ENCODE measurements at regions of chr3 and their contacts with region 1.

Region 1: DNA sequence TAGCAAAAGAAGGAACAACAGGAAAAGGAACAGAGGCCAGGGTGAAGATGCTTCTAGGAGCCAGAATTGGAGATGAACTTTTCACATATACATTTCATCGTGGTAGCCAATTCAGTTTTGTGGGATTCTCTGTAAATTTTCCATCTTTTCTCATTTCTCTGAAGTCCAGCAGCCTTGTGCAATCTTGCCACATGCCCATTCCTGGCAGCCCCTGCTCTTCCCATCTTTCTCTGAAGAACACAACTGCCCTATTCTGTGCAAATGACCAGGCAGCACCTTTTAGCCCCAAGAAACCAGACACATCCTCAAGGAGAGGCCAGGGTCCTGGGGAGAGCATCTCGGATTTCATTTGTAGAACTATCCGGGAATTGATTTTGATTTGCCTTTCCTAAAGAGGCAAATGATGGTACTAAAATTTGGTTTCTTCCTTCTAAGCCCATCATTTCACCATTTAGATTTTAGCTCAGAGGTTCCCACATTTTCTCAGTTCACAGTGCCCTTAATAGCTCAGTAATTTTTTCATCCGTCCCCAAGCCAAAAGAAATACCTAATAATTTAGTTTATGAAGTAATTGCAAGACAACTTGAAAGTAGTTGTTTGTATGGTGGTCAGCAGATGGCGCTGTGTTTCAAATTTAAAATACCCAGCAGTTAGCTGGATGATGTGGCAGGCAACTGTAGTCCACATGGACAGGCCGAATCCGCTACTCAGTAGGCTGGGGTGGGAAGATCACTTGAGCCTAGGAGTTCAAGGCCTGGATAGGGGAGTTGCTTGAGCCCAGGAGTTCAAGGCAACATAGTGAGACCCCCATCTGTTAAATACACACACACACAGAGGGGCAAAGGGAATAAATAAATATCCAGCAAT is 61.3 kb upstream of the ACKR4 start:
- DNase-seq: peak; percentile 77 to 82 (median 80)
- ATAC-seq: peak; percentile 82
- H3K4me3 ChIP-seq: no peak overlapping the region
- H3K27ac ChIP-seq: peak overlapping the region in 1 of 4 donors; percentile 18
- H3K4me1 ChIP-seq: peaks cover 34% of the 10 kb centered on the region
- H3K27me3 ChIP-seq: no peaks in the 10 kb centered on the region
- CTCF ChIP-seq: peak; percentile 51 to 83 (median 72)
- POLR2A ChIP-seq: no peak

Region 2: GRCh38 chr3:132641837-132642538 is 106.2 kb after region 1 on chr3:
- intact Hi-C with region 1: loop called (anchors 5 kb)
- DNase-seq: no peak
- ATAC-seq: peak; percentile 60
- H3K4me3 ChIP-seq: no peak overlapping the region
- H3K27ac ChIP-seq: no peak overlapping the region
- H3K4me1 ChIP-seq: no peaks in the 10 kb centered on the region
- H3K27me3 ChIP-seq: no peaks in the 10 kb centered on the region
- CTCF ChIP-seq: peak; percentile 56 to 91 (median 87)
- POLR2A ChIP-seq: no peak